ENCODE measurements at regions of chr10 and their contacts with region 1.

Region 1: GRCh38 chr10:126904819-126905686 is at the start of gene DOCK1:
- DNase-seq: peak in 5 of 10 donors; percentile 28 to 87 (median 62)

Region 2: DNA sequence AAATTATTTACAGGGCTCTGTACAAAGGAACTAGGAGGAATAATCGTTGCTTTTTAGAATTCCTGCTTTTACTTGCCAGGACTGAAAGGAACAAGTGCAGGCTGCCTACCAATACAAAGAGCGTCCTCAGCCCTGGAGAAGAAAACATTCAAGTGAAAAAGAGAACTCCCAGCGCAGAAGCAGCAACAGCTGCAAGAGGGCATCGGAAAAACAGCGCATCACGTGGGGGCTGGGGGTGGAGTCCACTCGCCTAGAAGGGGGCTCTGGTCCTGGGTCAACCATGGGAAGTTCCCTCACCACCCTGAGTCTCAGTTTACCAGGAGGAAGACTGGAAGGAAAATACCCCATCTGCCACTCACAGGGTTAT is 234.2 kb before region 1 on chr10:
- intact Hi-C with region 1: loop called (anchors 5 kb)
- DNase-seq: peak; percentile 68 to 97 (median 84)

Region 3: GRCh38 chr10:126969310-126969709 is 64.3 kb after region 1 on chr10:
- intact Hi-C with region 1: loop called (anchors 5 kb)
- DNase-seq: peak in 2 of 10 donors; percentile 30 to 89

Measured in posterior cingulate gyrus (tissue), 11 donors.